ENCODE measurements at regions of chr11 and their contacts with region 1.

Region 1: DNA sequence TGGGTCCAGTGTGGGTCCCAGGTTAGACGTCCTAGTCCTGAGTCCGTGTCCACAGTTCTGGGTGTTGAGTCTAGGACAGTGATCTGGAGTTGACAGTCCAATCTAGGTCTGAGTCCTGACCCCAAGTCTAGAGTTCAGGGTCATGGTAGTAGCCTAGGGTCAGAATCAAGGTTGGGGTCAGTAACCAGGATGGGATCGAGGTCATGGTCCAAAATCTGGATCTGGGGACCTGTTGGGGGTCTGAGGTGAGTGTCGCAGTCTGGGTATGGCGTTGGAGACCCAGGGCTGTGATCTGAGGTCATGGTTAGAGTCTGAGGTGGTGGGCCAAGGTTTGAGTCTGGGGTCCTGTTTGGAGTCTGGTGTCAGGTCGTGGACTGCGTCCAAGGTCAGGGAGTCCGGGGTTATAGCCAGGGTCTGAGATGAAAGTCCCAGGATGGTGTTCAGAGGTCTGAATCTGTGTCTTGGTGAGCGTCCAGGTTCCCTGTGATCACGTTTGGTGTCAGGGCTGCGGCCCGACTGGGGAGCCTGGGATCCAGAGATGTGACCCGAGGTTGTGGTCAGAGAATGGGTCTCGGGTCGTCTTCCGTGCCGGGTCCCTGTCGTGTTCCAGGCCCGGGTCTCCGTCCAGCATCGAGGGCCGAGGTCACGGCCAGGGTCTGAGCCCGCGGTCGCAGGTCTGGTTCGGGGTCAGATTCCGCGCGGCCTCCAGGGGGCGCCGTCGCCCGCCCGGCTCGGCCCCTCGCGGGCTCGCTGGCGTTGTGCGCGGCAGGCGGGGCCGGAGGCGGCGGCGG is 445 bp upstream of the GRK2 start:
- DNase-seq: peak; percentile 91
- ATAC-seq: peak; percentile 35
- H3K4me3 Mint-ChIP-seq: peak overlapping the region; percentile 61
- H3K27ac Mint-ChIP-seq: peak overlapping the region; percentile 70
- H3K4me1 Mint-ChIP-seq: peaks cover 56% of the 10 kb centered on the region
- H3K27me3 Mint-ChIP-seq: no peaks in the 10 kb centered on the region

Region 2: GRCh38 chr11:67076202-67076601 is 189.6 kb before region 1 on chr11:
- POLR2A ChIA-PET with region 1: no interaction called
- DNase-seq: no peak
- ATAC-seq: no peak
- H3K4me3 Mint-ChIP-seq: no peak overlapping the region
- H3K27ac Mint-ChIP-seq: no peak overlapping the region
- H3K4me1 Mint-ChIP-seq: peaks cover 4% of the 10 kb centered on the region
- H3K27me3 Mint-ChIP-seq: peaks cover 5% of the 10 kb centered on the region

Region 3: DNA sequence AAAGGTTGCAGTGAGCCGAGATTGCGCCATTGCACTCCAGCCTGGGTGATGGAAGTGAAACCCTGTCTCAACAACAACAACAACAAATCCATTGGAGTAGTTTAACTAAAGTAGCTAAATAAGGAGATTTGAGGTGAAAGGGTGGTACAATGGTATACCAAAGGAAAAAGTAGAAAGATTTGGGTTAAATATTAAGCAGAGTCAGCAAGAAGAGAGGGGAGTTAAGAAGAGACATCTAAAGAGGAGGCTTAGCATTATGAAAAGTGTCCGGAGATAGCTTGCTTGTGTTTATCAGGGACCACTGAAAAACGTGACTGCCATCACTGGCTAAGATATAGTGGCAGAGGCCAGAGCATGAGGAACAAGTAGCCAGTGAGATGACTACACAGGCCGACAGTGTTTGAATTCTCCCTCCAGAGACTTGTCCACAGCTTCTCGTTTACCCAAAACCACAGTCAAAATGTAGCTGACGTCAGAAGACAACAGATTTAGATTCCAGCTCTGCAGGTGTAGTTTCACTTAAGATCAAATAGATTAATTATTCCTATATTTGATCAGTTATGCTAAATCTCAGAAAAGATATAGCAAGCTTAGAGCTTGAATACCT is 32.1 kb before region 1 on chr11:
- POLR2A ChIA-PET with region 1: no interaction called
- DNase-seq: no peak
- ATAC-seq: no peak
- H3K4me3 Mint-ChIP-seq: no peak overlapping the region
- H3K27ac Mint-ChIP-seq: peak overlapping the region; percentile 23
- H3K4me1 Mint-ChIP-seq: peaks cover 20% of the 10 kb centered on the region
- H3K27me3 Mint-ChIP-seq: no peaks in the 10 kb centered on the region

Region 4: GRCh38 chr11:67252831-67253239 is 13.0 kb before region 1 on chr11:
- POLR2A ChIA-PET with region 1: interaction called, 15 read pairs
- DNase-seq: peak; percentile 49
- ATAC-seq: peak; percentile 89
- H3K4me3 Mint-ChIP-seq: peak overlapping the region; percentile 39
- H3K27ac Mint-ChIP-seq: peak overlapping the region; percentile 71
- H3K4me1 Mint-ChIP-seq: peaks cover 37% of the 10 kb centered on the region
- H3K27me3 Mint-ChIP-seq: no peaks in the 10 kb centered on the region

Region 5: GRCh38 chr11:67283481-67283963 is 17.7 kb after region 1 on chr11:
- POLR2A ChIA-PET with region 1: interaction called, 190 read pairs
- DNase-seq: no peak
- ATAC-seq: no peak
- H3K4me3 Mint-ChIP-seq: no peak overlapping the region
- H3K27ac Mint-ChIP-seq: no peak overlapping the region
- H3K4me1 Mint-ChIP-seq: peaks cover 34% of the 10 kb centered on the region
- H3K27me3 Mint-ChIP-seq: no peaks in the 10 kb centered on the region

Region 6: GRCh38 chr11:67303132-67303834 is 37.5 kb after region 1 on chr11 and contains the start of gene SSH3:
- POLR2A ChIA-PET with region 1: interaction called, 34 read pairs
- DNase-seq: peak; percentile 76
- ATAC-seq: peak; percentile 79
- H3K4me3 Mint-ChIP-seq: peak within 1 kb of the TSS; percentile 68
- H3K27ac Mint-ChIP-seq: peak within 1 kb of the TSS; percentile 75
- H3K4me1 Mint-ChIP-seq: peaks cover 8% of the 10 kb centered on the region
- H3K27me3 Mint-ChIP-seq: no peaks in the 10 kb centered on the region
- total RNA-seq, gene SSH3: 24.6 to 27.0 TPM